ENCODE measurements at regions of chr14 and their contacts with region 1.

Region 1: DNA sequence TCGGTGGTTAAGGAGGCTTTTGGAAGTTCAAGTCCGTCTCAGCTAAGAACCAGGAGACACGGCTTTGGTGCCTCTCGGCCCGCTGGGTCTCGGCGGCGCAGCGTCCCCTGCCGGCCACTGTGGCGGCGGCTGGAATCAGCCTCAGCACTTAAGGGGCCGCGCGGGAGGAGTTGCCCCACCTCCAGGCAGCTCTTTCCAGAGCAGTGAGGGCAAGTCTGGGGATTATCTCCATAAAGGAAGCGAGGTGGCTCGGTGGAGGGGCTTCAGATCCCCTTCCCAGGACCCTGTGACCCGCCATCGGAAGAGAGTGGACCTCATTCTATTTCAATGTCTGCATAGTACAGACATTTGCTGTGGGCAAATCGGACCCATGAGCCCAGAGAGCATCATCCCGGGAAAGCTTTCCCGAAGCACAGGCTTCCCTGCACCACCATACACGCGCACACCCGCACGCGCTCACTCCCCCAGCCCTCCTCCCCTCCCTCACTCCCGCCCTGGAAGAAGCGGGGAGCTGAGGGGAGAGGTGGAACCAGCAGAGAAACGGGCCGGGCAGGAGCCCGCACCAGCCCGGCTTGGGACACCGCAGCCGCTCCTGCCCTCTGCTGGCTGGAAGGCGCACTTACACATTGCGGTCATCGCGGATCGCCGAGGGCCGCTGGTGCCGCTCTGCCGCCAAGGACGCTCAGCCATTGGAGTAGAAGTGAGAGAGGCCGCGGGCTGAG is 15.9 kb downstream of the RNASE2 start:
- DNase-seq: peak; percentile 86
- H3K4me3 Mint-ChIP-seq: peak overlapping the region; percentile 84
- H3K27ac Mint-ChIP-seq: no peak overlapping the region
- H3K4me1 Mint-ChIP-seq: peaks cover 11% of the 10 kb centered on the region
- H3K27me3 Mint-ChIP-seq: peaks cover 25% of the 10 kb centered on the region

Region 2: GRCh38 chr14:20697273-20698017 is 273.7 kb before region 1 on chr14:
- CTCF ChIA-PET with region 1: interaction called, 27 read pairs
- POLR2A ChIA-PET with region 1: no interaction called
- intact Hi-C with region 1: loop called (anchors 1 kb)
- DNase-seq: peak; percentile 80
- H3K4me3 Mint-ChIP-seq: no peak overlapping the region
- H3K27ac Mint-ChIP-seq: no peak overlapping the region
- H3K4me1 Mint-ChIP-seq: peaks cover 5% of the 10 kb centered on the region
- H3K27me3 Mint-ChIP-seq: no peaks in the 10 kb centered on the region

Region 3: DNA sequence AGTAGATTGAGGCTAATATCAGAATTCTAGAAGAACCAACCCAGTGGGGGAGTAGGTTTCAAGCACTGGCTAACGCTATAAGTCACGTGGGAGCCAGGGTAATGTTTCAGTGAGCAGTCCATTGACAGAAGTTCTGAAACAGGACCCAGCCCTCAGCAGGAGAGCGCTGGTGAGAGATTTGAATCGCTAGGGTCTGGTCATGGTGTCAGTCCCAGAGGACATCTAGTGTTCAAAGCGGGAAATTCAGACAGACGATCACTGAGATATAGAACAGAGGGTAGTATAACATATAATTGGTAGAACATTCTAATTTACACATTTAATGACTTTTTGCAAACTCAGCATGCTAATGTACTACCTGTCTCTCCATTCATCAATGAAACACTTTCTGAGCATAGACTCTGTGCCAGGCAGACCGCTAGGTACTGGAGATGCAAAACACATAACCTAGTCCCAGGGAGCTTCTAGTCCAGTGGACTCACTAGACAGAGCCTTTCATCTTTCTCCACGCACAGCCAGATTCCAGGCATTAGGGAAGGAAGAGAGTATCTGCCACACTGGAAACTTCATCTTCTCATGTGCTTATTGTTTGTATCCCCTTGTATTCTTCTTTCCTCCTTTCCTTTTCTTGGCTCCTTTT is 115.4 kb before region 1 on chr14:
- CTCF ChIA-PET with region 1: interaction called, 82 read pairs
- POLR2A ChIA-PET with region 1: no interaction called
- intact Hi-C with region 1: loop called (anchors 1 kb)
- DNase-seq: peak; percentile 58
- H3K4me3 Mint-ChIP-seq: no peak overlapping the region
- H3K27ac Mint-ChIP-seq: no peak overlapping the region
- H3K4me1 Mint-ChIP-seq: no peaks in the 10 kb centered on the region
- H3K27me3 Mint-ChIP-seq: peaks cover 21% of the 10 kb centered on the region

Region 4: DNA sequence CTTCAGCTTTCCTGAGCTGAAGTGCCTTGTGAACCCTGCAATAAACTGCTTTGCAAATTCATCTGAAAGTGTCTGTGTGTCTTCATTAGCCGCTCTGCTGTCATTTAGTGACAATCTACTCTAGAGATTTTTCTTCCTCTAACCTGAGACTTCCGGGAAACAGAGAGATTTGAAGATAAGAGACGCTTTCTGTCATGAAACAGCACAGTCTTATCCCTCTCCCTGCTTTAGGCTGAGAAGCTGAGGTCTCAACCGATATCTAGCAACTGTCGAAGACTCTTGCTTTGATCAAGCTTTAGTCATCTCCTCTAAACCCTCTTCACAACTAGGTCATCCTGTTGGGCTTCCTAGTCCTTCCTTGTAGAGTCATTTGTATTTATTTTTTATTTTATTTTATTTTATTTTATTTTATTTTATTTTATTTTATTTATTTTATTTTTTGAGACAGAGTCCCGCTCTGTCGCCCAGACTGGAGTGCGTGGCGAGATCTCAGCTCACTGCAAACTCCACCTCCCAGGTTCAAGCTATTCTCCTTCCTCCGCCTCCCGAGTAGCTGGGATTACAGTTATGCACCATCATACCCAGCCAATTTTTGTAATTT is 14.7 kb before region 1 on chr14:
- CTCF ChIA-PET with region 1: interaction called, 77 read pairs
- POLR2A ChIA-PET with region 1: no interaction called
- intact Hi-C with region 1: loop called (anchors 1 kb)
- DNase-seq: no peak
- H3K4me3 Mint-ChIP-seq: no peak overlapping the region
- H3K27ac Mint-ChIP-seq: no peak overlapping the region
- H3K4me1 Mint-ChIP-seq: peaks cover 17% of the 10 kb centered on the region
- H3K27me3 Mint-ChIP-seq: peaks cover 8% of the 10 kb centered on the region

Region 5: GRCh38 chr14:20989572-20990551 is 18.7 kb after region 1 on chr14 and contains the start of gene METTL17:
- CTCF ChIA-PET with region 1: interaction called, 23 read pairs
- POLR2A ChIA-PET with region 1: no interaction called
- intact Hi-C with region 1: loop called (anchors 1 kb)
- DNase-seq: peak; percentile 94
- H3K4me3 Mint-ChIP-seq: peak within 1 kb of the TSS; percentile 91
- H3K27ac Mint-ChIP-seq: peak within 1 kb of the TSS; percentile 84
- H3K4me1 Mint-ChIP-seq: peaks cover 30% of the 10 kb centered on the region
- H3K27me3 Mint-ChIP-seq: no peaks in the 10 kb centered on the region
- total RNA-seq, gene METTL17: 74.9 to 78.9 TPM

Region 6: DNA sequence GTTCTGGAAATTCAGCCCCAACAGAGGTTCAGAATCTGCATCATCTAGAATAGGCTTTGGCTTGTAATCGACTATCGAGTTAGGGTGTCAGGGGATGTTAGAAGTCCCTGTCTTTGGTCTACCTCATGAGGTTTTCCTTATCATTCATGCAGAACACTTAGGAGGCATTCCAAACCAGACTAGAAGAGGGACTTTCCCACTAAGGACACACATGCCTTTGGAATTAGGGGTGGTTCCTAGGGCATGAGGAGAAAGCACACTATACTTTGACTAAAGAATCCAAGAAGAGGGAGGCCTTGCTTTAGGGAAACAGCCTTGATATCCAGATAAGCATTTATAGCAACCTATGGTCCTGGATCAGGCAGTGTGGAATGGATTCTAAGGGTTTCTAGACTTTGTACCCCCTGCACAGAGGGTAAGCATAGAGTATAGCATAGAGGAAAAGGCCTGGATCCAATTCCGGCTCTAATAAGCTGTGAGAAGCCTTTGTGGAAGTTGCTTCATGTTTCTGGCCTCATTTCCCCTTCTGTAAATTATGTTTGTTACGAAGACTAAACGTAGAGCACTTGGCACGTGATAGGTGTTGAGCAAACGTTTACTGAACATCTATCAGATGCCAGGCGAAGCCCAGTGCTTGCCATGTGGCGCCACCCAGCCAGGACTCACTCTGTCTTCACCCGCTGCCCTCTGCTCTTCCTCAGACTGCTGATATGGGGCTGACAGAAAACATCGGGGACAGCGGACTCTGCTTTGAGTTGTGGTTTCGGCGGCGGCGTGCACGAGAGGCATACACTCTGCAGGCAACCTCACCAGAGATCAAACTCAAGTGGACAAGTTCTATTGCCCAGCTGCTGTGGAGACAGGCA is 114.1 kb after region 1 on chr14:
- CTCF ChIA-PET with region 1: no interaction called
- POLR2A ChIA-PET with region 1: no interaction called
- intact Hi-C with region 1: no loop called
- DNase-seq: no peak
- H3K4me3 Mint-ChIP-seq: no peak overlapping the region
- H3K27ac Mint-ChIP-seq: no peak overlapping the region
- H3K4me1 Mint-ChIP-seq: peaks cover 18% of the 10 kb centered on the region
- H3K27me3 Mint-ChIP-seq: no peaks in the 10 kb centered on the region

Region 7: GRCh38 chr14:21103710-21104447 is 132.7 kb after region 1 on chr14:
- CTCF ChIA-PET with region 1: interaction called, 23 read pairs
- POLR2A ChIA-PET with region 1: interaction called, 5 read pairs
- intact Hi-C with region 1: no loop called
- DNase-seq: peak; percentile 96
- H3K4me3 Mint-ChIP-seq: peak overlapping the region; percentile 85
- H3K27ac Mint-ChIP-seq: peak overlapping the region; percentile 76
- H3K4me1 Mint-ChIP-seq: peaks cover 41% of the 10 kb centered on the region
- H3K27me3 Mint-ChIP-seq: no peaks in the 10 kb centered on the region